CD4-positive, alpha-beta memory T cell (primary cell): ENCODE measurements at regions of chr20 and their contacts with region 1.

Region 1: GRCh38 chr20:44210422-44211176 is at the start of gene OSER1:
- DNase-seq: peak; percentile 99
- H3K4me3 ChIP-seq: peak within 1 kb of the TSS; percentile 77 to 78
- H3K4me3 Mint-ChIP-seq: peak within 1 kb of the TSS; percentile 85 to 99 (median 94)
- H3K27ac ChIP-seq: peak within 1 kb of the TSS; percentile 98
- H3K27ac Mint-ChIP-seq: peak within 1 kb of the TSS; percentile 90 to 100 (median 98)
- H3K4me1 ChIP-seq: peaks cover 53% of the 10 kb centered on the region
- H3K4me1 Mint-ChIP-seq: peaks cover 42 to 79% (median 56%) of the 10 kb centered on the region in 4 donors
- H3K27me3 ChIP-seq: no peaks in the 10 kb centered on the region
- H3K27me3 Mint-ChIP-seq: no peaks in the 10 kb centered on the region
- total RNA-seq, gene OSER1: 35.5 to 36.6 TPM

Region 2: GRCh38 chr20:44302026-44302669 is 91.5 kb after region 1 on chr20:
- CTCF ChIA-PET with region 1: no interaction called
- POLR2A ChIA-PET with region 1: no interaction called
- intact Hi-C with region 1: no loop called
- DNase-seq: no peak
- H3K4me3 ChIP-seq: no peak overlapping the region
- H3K4me3 Mint-ChIP-seq: no peak overlapping the region
- H3K27ac ChIP-seq: no peak overlapping the region
- H3K27ac Mint-ChIP-seq: no peak overlapping the region
- H3K4me1 ChIP-seq: no peaks in the 10 kb centered on the region
- H3K4me1 Mint-ChIP-seq: peaks cover 3 to 6% (median 5%) of the 10 kb centered on the region in 4 donors
- H3K27me3 ChIP-seq: no peaks in the 10 kb centered on the region
- H3K27me3 Mint-ChIP-seq: no peaks in the 10 kb centered on the region

Region 3: DNA sequence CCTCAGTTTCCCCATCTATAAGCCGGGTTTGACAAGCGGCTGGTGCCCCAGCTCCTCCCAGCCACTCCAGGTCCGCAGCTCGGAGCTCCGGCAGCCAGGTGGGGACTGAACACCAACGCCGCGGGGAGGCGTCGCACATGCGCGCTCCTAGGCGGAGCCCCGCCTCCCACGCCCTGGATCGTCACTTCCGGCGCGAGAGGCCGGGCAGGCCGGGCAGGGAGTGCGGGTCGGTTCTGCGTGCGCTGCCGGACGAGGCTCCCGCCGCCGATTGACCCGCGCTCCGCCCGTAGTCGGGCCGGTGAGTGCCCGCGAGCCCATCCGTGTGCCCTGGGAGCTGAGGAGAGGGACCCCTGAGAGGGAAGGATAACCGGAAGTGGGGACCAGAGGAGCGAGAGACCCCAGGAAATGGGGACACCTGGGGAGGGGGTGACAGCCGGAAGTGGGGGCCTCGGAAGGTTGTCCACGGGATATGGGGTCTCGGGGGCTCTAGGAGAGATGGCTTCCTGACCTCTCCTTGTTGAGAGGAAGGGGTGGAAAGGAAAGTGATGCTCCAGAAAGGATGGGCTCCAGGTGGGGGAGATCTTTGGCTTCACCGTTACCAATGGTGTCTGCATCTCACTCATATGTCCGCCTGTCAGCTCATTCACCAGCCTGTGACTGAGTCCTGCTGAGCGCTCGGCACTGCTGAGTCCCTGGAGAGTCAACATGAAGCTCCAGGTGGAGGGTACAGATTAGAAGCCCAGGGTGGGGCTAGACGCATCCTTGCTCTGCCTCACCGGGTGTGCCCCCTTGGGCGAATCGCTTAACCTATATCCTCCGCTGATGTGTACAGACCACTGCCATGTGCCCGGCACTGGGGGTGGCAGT is 265.3 kb after region 1 on chr20 and contains the start of gene TTPAL:
- CTCF ChIA-PET with region 1: no interaction called
- POLR2A ChIA-PET with region 1: interaction called, 11 read pairs
- intact Hi-C with region 1: loop called (anchors 5 kb)
- DNase-seq: peak; percentile 85 to 89 (median 89)
- H3K4me3 ChIP-seq: peak within 1 kb of the TSS; percentile 53 to 72
- H3K4me3 Mint-ChIP-seq: peak within 1 kb of the TSS; percentile 88 to 94 (median 92)
- H3K27ac ChIP-seq: peak within 1 kb of the TSS; percentile 95
- H3K27ac Mint-ChIP-seq: peak within 1 kb of the TSS; percentile 92 to 99 (median 96)
- H3K4me1 ChIP-seq: peaks cover 17% of the 10 kb centered on the region
- H3K4me1 Mint-ChIP-seq: peaks cover 13 to 32% (median 25%) of the 10 kb centered on the region in 4 donors
- H3K27me3 ChIP-seq: no peaks in the 10 kb centered on the region
- H3K27me3 Mint-ChIP-seq: no peaks in the 10 kb centered on the region
- total RNA-seq, gene TTPAL: 17.5 to 18.9 TPM

Region 4: DNA sequence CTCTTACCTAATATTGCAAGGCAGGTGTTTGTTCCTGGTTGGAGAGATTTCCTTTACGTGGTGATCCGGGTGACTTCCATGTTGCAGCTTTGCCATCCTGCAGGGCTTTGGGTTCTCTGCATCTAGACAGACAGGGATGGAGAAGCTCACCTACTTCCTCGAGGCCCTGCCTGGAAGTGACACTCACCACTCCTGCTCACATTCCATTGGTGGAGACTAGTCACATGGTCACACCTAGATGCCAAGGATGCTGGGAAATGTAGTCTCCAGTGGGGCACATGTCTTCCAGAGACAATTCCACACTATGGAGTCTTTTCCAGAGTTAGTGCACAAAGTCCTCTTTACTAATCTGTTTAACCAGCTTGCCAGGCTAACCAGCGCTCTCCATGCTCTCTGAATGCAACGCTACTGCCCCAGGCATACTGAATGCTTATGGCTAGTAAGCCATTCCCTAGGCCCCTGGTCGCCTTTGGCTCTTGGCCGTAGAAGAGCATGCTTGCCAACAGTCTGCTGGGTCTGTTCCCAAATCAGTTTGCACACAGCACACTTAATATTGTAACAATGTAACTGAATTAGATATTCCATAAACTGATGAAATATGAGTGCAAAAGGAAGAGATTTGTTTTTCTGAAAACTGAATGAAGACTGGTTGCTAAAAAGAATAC is 528.3 kb after region 1 on chr20:
- CTCF ChIA-PET with region 1: no interaction called
- POLR2A ChIA-PET with region 1: no interaction called
- intact Hi-C with region 1: loop called (anchors 2 kb)
- DNase-seq: peak; percentile 24 to 54 (median 39)
- H3K4me3 ChIP-seq: no peak overlapping the region
- H3K4me3 Mint-ChIP-seq: peak overlapping the region in 2 of 8 donors; percentile 7 to 14
- H3K27ac ChIP-seq: no peak overlapping the region
- H3K27ac Mint-ChIP-seq: peak overlapping the region in 2 of 7 donors; percentile 2 to 8
- H3K4me1 ChIP-seq: no peaks in the 10 kb centered on the region
- H3K4me1 Mint-ChIP-seq: peaks cover 10 to 24% (median 18%) of the 10 kb centered on the region in 4 donors
- H3K27me3 ChIP-seq: no peaks in the 10 kb centered on the region
- H3K27me3 Mint-ChIP-seq: peaks cover 0 to 2% of the 10 kb centered on the region in 2 donors